ENCODE measurements at regions of chr14 and their contacts with region 1.

Region 1: DNA sequence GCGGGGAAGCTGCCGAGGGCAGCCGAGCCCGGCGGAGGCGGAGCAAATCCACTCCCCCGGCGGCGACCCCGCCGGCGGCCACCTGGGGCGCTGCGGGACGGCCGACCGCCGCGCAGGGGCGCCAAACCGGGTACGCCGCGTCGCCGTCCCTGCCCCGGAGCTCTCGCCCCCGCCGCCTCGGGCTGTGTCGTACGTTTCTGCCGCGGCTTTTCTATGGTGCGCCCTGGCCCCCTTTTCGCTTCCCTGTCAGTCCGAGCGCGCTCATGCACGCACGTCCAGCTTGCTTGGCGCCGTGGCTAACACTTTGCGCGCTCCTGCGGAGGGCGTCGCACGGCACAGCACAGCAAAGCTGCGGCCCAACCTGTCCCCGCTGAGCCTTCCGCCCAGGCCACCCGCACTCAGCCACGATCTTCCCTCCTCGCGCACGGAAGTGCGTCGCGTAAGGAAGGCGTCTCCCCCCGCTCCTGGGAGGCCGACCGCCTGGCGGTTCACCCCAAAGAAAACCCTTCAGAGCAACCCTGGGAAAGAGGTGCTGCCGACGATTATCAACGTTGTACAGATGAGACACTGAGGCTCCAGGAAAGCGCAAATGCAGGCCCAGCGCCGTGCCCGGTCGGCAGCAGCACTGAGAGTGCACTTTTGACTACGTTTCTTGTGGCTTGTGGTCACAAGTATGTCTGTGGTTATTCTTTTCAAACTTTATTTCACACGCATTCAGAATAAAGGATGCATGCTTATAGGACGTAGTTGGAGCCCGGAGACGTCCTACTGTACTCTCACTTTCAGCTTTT is at the start of gene HECTD1:
- DNase-seq: peak; percentile 94 to 96 (median 96)
- H3K4me3 ChIP-seq: peak within 1 kb of the TSS; percentile 63 to 86 (median 76)
- H3K27ac ChIP-seq: peak within 1 kb of the TSS; percentile 99
- H3K4me1 ChIP-seq: peaks cover 0 to 6% (median 5%) of the 10 kb centered on the region in 3 donors
- H3K27me3 ChIP-seq: no peaks in the 10 kb centered on the region
- CTCF ChIP-seq: peak; percentile 77
- total RNA-seq, gene HECTD1: 164 TPM

Region 2: DNA sequence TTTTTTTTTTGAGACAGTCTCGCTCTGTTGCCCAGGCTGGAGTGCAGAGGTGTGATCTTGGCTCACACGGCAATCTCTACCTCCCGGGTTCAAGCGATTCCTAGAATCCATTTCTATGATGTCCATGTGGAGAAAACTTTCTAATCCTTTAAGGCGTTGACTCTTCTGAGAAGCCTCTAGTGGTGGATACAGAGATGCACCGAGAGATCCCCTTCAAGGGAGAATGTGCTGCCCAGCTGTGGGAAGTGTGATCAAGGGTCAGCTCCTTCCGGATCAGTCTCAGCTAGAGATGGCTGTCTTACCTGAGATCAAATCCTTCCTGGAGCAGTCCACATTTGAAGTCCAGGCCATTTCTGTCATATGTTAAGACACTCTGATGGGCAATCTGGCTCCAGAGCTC is 92.3 kb after region 1 on chr14:
- intact Hi-C with region 1: loop called (anchors 10 kb)
- DNase-seq: no peak
- H3K4me3 ChIP-seq: no peak overlapping the region
- H3K27ac ChIP-seq: no peak overlapping the region
- H3K4me1 ChIP-seq: no peaks in the 10 kb centered on the region
- H3K27me3 ChIP-seq: no peaks in the 10 kb centered on the region
- CTCF ChIP-seq: no peak

Region 3: DNA sequence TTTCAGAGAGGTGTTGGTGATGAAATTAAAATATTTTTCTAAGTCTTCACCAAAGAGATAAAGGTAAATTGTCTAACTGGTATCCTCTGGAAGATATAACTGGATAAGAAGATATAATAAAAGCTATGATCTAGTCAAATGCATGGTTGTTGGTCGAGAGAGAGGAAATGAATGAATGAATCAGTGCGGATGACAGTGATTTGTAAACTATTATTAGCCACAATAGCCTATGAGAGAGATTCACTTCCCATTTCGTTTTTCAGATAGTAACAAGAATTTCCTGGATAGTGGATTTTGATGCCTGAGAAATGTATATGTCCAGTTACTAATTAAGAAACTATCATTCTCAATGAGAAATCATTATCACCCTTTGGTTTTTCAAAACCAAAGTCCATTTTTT is 149.3 kb after region 1 on chr14:
- intact Hi-C with region 1: loop called (anchors 10 kb)
- DNase-seq: no peak
- H3K4me3 ChIP-seq: no peak overlapping the region
- H3K27ac ChIP-seq: no peak overlapping the region
- H3K4me1 ChIP-seq: no peaks in the 10 kb centered on the region
- H3K27me3 ChIP-seq: no peaks in the 10 kb centered on the region
- CTCF ChIP-seq: no peak

Region 4: GRCh38 chr14:31510222-31510621 is 302.3 kb after region 1 on chr14:
- intact Hi-C with region 1: no loop called
- DNase-seq: peak in 2 of 5 donors; percentile 20 to 28
- H3K4me3 ChIP-seq: no peak overlapping the region
- H3K27ac ChIP-seq: no peak overlapping the region
- H3K4me1 ChIP-seq: peaks cover 0 to 8% (median 7%) of the 10 kb centered on the region in 3 donors
- H3K27me3 ChIP-seq: no peaks in the 10 kb centered on the region
- CTCF ChIP-seq: peak; percentile 42

Measured in kidney (tissue), 22 donors.